ENCODE measurements at regions of chr13 and their contacts with region 1.

Region 1: DNA sequence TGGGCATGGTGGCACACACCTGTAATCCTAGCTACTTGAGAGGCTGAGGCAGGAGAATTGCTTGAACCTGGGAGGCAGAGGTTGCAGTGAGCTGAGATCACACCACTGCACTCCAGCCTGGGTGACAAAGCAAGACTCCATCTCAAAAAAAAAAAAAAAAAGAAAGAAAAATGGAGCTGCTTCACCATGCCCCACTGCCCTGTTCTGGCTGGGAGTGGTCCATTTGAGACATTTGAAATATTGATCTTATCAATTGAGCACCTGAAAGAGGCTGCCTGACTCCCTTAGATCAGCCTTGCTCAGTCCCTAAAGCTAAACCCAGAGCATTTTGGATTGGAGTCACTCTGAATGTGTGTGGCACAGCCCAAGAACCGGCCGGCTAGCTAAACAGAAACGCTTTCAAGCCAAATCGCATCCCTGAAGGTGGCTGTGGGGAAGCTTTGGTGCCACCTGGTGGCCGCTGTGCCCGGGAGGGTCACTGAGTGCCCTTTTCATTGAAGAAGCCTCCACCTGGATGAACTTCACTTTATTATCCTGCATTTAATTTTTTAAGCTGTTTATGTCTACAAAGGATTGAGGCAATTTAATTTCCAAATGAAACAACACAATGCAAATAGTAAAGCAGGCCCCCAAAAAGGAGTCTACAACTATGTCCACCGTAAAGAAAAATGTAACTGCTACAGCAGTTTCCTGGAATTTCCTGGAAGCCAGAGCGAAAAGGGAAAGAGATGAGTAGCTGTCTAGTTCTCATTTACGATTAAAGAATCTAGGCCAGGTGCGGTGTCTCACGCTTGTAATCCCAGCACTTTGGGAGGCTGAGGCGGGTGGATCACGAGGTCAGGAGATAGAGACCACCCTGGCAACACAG is 53.1 kb upstream of the SERPINE3 start:
- DNase-seq: peak; percentile 73
- H3K4me3 ChIP-seq: no peak overlapping the region
- H3K27ac ChIP-seq: no peak overlapping the region
- H3K4me1 ChIP-seq: no peaks in the 10 kb centered on the region
- H3K27me3 ChIP-seq: peaks cover 0 to 3% of the 10 kb centered on the region in 2 experiments
- CTCF ChIP-seq: peak; percentile 87 to 92
- POLR2A ChIP-seq: no peak

Region 2: GRCh38 chr13:51148952-51149573 is 137.3 kb before region 1 on chr13:
- CTCF ChIA-PET with region 1: interaction called, 378 read pairs
- POLR2A ChIA-PET with region 1: interaction called, 6 read pairs
- dilution Hi-C with region 1: no loop called
- intact Hi-C with region 1: loop called (anchors 1 kb)
- DNase-seq: peak; percentile 78
- H3K4me3 ChIP-seq: no peak overlapping the region
- H3K27ac ChIP-seq: no peak overlapping the region
- H3K4me1 ChIP-seq: peaks cover 11% of the 10 kb centered on the region
- H3K27me3 ChIP-seq: no peaks in the 10 kb centered on the region
- CTCF ChIP-seq: peak; percentile 60 to 68
- POLR2A ChIP-seq: no peak

Region 3: GRCh38 chr13:51230477-51231105 is 55.8 kb before region 1 on chr13:
- CTCF ChIA-PET with region 1: interaction called, 57 read pairs
- POLR2A ChIA-PET with region 1: no interaction called
- dilution Hi-C with region 1: no loop called
- intact Hi-C with region 1: no loop called
- DNase-seq: peak; percentile 87
- H3K4me3 ChIP-seq: peak overlapping the region; percentile 25 to 66 (median 35)
- H3K27ac ChIP-seq: peak overlapping the region; percentile 28
- H3K4me1 ChIP-seq: peaks cover 26% of the 10 kb centered on the region
- H3K27me3 ChIP-seq: no peaks in the 10 kb centered on the region
- CTCF ChIP-seq: no peak
- POLR2A ChIP-seq: no peak

Region 4: GRCh38 chr13:51262501-51263211 is 23.7 kb before region 1 on chr13:
- CTCF ChIA-PET with region 1: interaction called, 31 read pairs
- POLR2A ChIA-PET with region 1: no interaction called
- dilution Hi-C with region 1: no loop called
- intact Hi-C with region 1: no loop called
- DNase-seq: no peak
- H3K4me3 ChIP-seq: no peak overlapping the region
- H3K27ac ChIP-seq: no peak overlapping the region
- H3K4me1 ChIP-seq: no peaks in the 10 kb centered on the region
- H3K27me3 ChIP-seq: no peaks in the 10 kb centered on the region
- CTCF ChIP-seq: peak in 1 of 2 donors; percentile 1
- POLR2A ChIP-seq: no peak

Region 5: GRCh38 chr13:51297556-51297955 is 11.2 kb after region 1 on chr13:
- CTCF ChIA-PET with region 1: interaction called, 38 read pairs
- POLR2A ChIA-PET with region 1: no interaction called
- dilution Hi-C with region 1: no loop called
- intact Hi-C with region 1: no loop called
- DNase-seq: no peak
- H3K4me3 ChIP-seq: no peak overlapping the region
- H3K27ac ChIP-seq: no peak overlapping the region
- H3K4me1 ChIP-seq: no peaks in the 10 kb centered on the region
- H3K27me3 ChIP-seq: peaks cover 0 to 6% of the 10 kb centered on the region in 2 experiments
- CTCF ChIP-seq: no peak
- POLR2A ChIP-seq: no peak

Region 6: DNA sequence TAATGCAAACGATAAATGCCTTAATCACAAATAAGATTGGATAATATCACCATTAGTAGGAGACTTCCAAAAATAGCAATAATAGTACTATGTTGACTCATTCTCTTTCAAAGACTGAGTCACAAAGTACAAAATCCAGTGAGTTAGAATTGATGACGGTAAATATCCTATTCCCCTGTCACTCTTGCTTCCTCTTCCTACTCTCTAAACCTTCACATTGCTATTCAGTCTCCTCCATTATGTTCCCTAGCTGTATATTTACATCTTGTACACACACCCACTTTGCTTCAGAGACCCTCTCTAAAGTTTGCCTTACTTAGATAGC is 192.8 kb after region 1 on chr13:
- CTCF ChIA-PET with region 1: no interaction called
- POLR2A ChIA-PET with region 1: no interaction called
- dilution Hi-C with region 1: no loop called
- intact Hi-C with region 1: no loop called
- DNase-seq: peak; percentile 13
- H3K4me3 ChIP-seq: no peak overlapping the region
- H3K27ac ChIP-seq: no peak overlapping the region
- H3K4me1 ChIP-seq: peaks cover 2% of the 10 kb centered on the region
- H3K27me3 ChIP-seq: no peaks in the 10 kb centered on the region
- CTCF ChIP-seq: no peak
- POLR2A ChIP-seq: no peak

Measured in endothelial cell of umbilical vein (primary cell).